Panc1 (cell line): ENCODE measurements at regions of chr2 and their contacts with region 1.

Region 1: DNA sequence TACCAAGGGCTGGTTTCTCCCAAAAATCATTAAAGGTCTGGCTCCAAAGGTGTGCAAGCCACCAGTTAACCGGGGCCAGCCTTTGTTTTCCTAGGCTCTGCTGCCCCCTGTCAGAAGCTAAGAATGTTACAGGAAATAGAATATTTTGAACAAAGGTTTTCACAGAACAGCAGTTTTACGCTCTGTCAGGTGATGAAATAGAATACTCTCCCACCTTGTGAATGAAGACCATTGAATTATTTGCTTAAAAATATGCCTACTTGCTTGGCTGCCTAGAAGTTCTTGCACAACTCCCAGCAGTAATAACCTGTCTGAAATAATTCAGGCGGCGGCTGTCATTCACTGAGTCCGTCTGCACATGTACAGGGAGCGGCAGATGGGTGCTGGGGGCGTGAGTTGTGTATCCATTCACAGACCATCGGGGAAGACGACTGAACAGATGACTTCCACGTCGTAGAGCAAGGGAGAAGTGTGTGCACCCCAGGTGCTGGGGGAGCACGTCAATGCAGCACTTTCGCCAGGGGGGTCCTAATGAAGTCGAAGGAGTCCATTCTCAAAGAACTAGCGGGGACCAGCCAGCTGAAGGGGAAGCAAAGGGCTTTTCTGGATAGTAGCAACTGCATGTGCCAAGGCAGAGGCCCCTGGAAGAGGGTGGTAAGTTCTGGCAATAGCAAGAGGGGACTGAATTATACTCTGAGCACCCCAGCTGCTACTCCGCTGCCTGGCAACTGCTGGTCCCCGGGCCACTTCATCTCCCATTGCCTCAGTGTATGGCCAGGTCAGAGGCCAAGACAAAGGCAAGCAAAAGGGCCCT is 56.1 kb downstream of the SF3B1 start:
- DNase-seq: peak; percentile 22
- ATAC-seq: peak; percentile 83
- H3K4me3 ChIP-seq: peak overlapping the region; percentile 2 to 41; a peak in 3 of 4 replicates
- H3K27ac ChIP-seq: no peak overlapping the region
- H3K4me1 ChIP-seq: no peaks in the 10 kb centered on the region
- H3K27me3 ChIP-seq: no peaks in the 10 kb centered on the region
- CTCF ChIP-seq: peak; percentile 85

Region 2: GRCh38 chr2:196987649-196988364 is 390.9 kb before region 1 on chr2:
- CTCF ChIA-PET with region 1: no interaction called
- POLR2A ChIA-PET with region 1: interaction called, 10 read pairs
- in situ Hi-C with region 1: no loop called
- intact Hi-C with region 1: no loop called
- DNase-seq: peak; percentile 78
- ATAC-seq: peak; percentile 98
- H3K4me3 ChIP-seq: peak overlapping the region; percentile 0 to 47; a peak in 3 of 4 replicates
- H3K27ac ChIP-seq: peak overlapping the region; percentile 77
- H3K4me1 ChIP-seq: peaks cover 11% of the 10 kb centered on the region; the same call in 1 of the 2 replicates
- H3K27me3 ChIP-seq: no peaks in the 10 kb centered on the region
- CTCF ChIP-seq: no peak

Region 3: DNA sequence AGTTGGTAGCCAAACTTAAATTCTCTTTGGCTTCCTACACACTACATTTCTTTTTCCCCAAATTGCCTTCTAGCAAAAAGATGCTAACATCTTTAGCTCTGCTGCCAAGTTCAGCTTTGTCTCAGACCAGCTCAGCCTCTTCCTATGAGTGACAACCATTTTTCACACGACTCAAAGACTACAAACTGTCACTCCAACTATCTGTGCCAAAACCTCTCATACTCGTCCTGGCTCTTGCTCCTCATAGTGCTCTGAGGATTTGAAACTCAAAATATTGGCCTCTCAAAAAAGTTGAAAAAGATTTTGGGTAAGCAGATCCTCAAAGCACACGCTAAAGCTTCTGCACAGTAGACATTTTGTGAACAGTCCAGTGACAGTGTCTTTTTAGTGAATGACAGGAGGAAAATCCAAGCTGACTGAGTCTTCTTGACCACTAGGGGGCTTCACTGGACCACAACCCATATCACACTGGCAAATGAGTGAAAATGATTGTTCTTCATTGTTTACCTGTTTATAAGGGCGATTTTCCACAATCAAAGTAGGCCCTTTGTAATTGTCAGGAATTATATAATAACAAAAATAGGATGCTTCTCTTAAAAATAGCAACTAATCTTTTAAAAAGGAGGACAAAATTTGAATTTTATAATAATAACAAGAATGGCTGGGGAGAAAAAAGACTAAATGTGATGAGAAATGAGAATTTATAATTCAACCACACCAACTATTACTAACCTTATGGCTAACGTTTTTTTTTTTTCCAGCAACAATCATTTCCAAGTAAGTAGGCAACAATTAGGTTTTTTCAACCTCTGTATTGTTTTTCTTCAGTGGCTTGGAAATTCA is 366.7 kb before region 1 on chr2:
- CTCF ChIA-PET with region 1: interaction called, 10 read pairs
- POLR2A ChIA-PET with region 1: no interaction called
- in situ Hi-C with region 1: no loop called
- intact Hi-C with region 1: loop called (anchors 5 kb)
- DNase-seq: no peak
- ATAC-seq: peak; percentile 90
- H3K4me3 ChIP-seq: no peak overlapping the region
- H3K27ac ChIP-seq: no peak overlapping the region
- H3K4me1 ChIP-seq: no peaks in the 10 kb centered on the region; the same call in 1 of the 2 replicates
- H3K27me3 ChIP-seq: no peaks in the 10 kb centered on the region
- CTCF ChIP-seq: peak; percentile 90

Region 4: GRCh38 chr2:197113275-197113711 is 265.4 kb before region 1 on chr2:
- CTCF ChIA-PET with region 1: no interaction called
- POLR2A ChIA-PET with region 1: no interaction called
- in situ Hi-C with region 1: no loop called
- intact Hi-C with region 1: loop called (anchors 1 kb)
- DNase-seq: peak; percentile 33
- ATAC-seq: peak; percentile 65; the same call in 1 of the 2 replicates
- H3K4me3 ChIP-seq: no peak overlapping the region
- H3K27ac ChIP-seq: no peak overlapping the region
- H3K4me1 ChIP-seq: no peaks in the 10 kb centered on the region
- H3K27me3 ChIP-seq: no peaks in the 10 kb centered on the region
- CTCF ChIP-seq: peak; percentile 73

Region 5: GRCh38 chr2:197124639-197125390 is 253.9 kb before region 1 on chr2:
- CTCF ChIA-PET with region 1: no interaction called
- POLR2A ChIA-PET with region 1: no interaction called
- in situ Hi-C with region 1: no loop called
- intact Hi-C with region 1: loop called (anchors 5 kb)
- DNase-seq: no peak
- ATAC-seq: no peak
- H3K4me3 ChIP-seq: no peak overlapping the region
- H3K27ac ChIP-seq: no peak overlapping the region
- H3K4me1 ChIP-seq: no peaks in the 10 kb centered on the region
- H3K27me3 ChIP-seq: no peaks in the 10 kb centered on the region
- CTCF ChIP-seq: no peak

Region 6: GRCh38 chr2:197191177-197191939 is 187.3 kb before region 1 on chr2:
- CTCF ChIA-PET with region 1: no interaction called
- POLR2A ChIA-PET with region 1: no interaction called
- in situ Hi-C with region 1: no loop called
- intact Hi-C with region 1: loop called (anchors 2 kb)
- DNase-seq: no peak
- ATAC-seq: peak; percentile 75; the same call in 1 of the 2 replicates
- H3K4me3 ChIP-seq: no peak overlapping the region
- H3K27ac ChIP-seq: no peak overlapping the region
- H3K4me1 ChIP-seq: no peaks in the 10 kb centered on the region
- H3K27me3 ChIP-seq: no peaks in the 10 kb centered on the region
- CTCF ChIP-seq: peak; percentile 73

Region 7: DNA sequence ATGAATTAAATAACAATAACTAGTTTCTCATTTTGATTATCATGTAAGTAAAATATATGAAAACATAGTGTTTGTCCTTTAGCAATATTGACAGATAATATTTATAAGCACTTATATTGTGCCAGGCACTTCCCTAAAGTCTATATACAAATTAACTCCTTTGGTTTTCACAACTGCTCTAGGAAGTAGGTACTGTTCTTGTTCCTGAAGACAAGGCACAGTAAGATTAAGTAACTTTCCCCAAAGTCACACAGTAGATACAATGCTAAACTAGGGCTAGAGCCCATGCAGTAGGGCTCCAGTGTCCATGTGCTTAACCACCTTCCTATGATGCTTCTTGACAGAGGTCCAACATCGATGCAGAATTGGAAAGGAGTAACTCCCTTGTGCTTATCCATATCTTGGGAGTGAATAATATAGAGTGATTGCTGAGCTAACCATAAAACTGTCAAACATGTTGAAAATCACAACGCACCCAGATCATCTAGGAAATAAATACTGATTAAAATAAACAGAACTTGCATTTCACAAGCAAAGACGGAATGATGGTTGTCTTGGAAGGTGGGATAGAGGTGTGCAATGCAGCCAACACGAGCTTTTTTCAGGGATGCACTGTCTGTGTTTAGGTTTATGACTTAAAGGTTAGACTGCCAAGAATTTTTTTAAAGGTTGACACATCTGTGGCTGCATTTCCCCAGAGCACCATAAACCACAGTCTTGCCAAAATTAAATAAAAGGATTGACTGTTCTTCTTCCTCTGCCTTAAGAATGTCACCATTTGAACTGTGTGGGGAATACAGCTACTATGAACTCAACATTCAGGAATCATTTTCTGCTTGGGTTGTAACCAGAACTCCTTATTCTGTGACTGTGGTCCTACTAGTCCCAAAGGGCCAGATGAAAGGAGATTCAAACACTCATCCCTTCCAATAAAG is 148.9 kb before region 1 on chr2:
- CTCF ChIA-PET with region 1: no interaction called
- POLR2A ChIA-PET with region 1: interaction called, 10 read pairs
- in situ Hi-C with region 1: no loop called
- intact Hi-C with region 1: no loop called
- DNase-seq: no peak
- ATAC-seq: no peak
- H3K4me3 ChIP-seq: no peak overlapping the region
- H3K27ac ChIP-seq: no peak overlapping the region
- H3K4me1 ChIP-seq: no peaks in the 10 kb centered on the region; the same call in 1 of the 2 replicates
- H3K27me3 ChIP-seq: no peaks in the 10 kb centered on the region
- CTCF ChIP-seq: no peak

Region 8: DNA sequence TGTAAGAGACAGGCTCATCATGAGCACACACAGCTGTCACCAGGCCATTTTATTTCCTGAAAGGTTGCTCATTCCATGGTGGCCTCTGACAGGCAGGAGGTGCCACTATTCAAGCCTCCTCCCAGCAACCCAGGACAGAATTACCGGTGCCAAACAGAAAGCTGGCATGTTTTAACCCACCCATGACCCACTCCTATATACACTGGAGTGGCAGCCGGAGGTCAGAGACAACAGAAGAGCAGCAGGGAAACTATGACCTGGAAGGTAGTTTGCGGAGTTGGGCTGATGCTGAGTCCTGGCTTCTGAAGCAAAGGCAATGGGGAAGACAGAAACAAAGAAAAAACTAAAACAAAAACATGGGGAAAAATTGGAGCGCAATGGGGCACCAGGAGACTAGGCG is 294.4 kb after region 1 on chr2:
- CTCF ChIA-PET with region 1: no interaction called
- POLR2A ChIA-PET with region 1: no interaction called
- in situ Hi-C with region 1: no loop called
- intact Hi-C with region 1: no loop called
- DNase-seq: no peak
- ATAC-seq: 0 out of 2 replicates have a peak, but pooled peaks have one; percentile 38
- H3K4me3 ChIP-seq: no peak overlapping the region
- H3K27ac ChIP-seq: no peak overlapping the region
- H3K4me1 ChIP-seq: no peaks in the 10 kb centered on the region
- H3K27me3 ChIP-seq: no peaks in the 10 kb centered on the region
- CTCF ChIP-seq: no peak